Endothelial cell of umbilical vein (primary cell): ENCODE measurements at regions of chr1 and their contacts with region 1.

Region 1: DNA sequence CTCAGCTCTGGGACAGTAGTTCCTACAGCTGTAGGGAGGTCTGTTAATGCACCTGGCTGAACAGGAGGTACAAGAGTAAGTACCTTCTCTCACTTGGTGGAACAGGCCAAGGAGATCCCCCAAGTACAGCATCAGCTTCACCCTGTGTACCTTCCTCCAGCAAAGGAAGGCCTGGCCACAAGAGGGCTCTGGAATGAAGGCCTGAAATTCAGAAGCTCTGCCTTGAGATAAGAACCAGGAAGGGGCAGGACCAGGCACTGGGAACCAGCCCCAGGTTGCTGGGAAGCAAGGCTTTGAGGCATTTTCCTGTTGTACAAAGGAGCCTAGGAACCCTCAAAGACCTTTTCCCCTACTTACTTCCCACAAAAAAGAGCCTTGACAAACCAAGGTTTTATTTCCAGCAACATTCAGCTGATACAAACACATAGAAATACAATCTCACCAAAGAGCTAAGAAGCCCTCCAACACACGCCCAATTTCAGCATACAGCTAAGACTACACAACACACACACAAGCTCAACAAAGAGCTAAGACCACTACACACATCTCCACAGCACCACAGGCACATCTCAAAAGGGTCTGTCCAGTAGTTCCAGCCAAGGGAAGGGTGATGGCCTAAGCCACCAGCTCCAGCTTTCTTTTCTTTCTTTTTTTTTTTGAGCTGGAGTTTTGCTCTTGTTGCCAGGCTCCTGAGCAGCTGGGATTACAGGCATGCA is 23.5 kb downstream of the F11R start:
- DNase-seq: peak; percentile 90
- H3K4me3 ChIP-seq: no peak overlapping the region
- H3K27ac ChIP-seq: peak overlapping the region; percentile 62
- H3K4me1 ChIP-seq: peaks cover 24% of the 10 kb centered on the region
- H3K27me3 ChIP-seq: no peaks in the 10 kb centered on the region
- CTCF ChIP-seq: peak; percentile 77 to 86
- POLR2A ChIP-seq: no peak

Region 2: GRCh38 chr1:160244209-160244608 is 753.3 kb before region 1 on chr1:
- CTCF ChIA-PET with region 1: no interaction called
- POLR2A ChIA-PET with region 1: no interaction called
- dilution Hi-C with region 1: no loop called
- intact Hi-C with region 1: no loop called
- DNase-seq: peak; percentile 28
- H3K4me3 ChIP-seq: no peak overlapping the region
- H3K27ac ChIP-seq: no peak overlapping the region
- H3K4me1 ChIP-seq: peaks cover 5% of the 10 kb centered on the region
- H3K27me3 ChIP-seq: no peaks in the 10 kb centered on the region
- CTCF ChIP-seq: no peak
- POLR2A ChIP-seq: no peak

Region 3: GRCh38 chr1:161013488-161014230 is 16.2 kb after region 1 on chr1:
- CTCF ChIA-PET with region 1: interaction called, 100 read pairs
- POLR2A ChIA-PET with region 1: interaction called, 10 read pairs
- dilution Hi-C with region 1: no loop called
- intact Hi-C with region 1: loop called (anchors 1 kb)
- DNase-seq: peak; percentile 99
- H3K4me3 ChIP-seq: peak overlapping the region in 2 of 3 experiments; percentile 1 to 21
- H3K27ac ChIP-seq: peak overlapping the region; percentile 99
- H3K4me1 ChIP-seq: peaks cover 37% of the 10 kb centered on the region
- H3K27me3 ChIP-seq: no peaks in the 10 kb centered on the region
- CTCF ChIP-seq: no peak
- POLR2A ChIP-seq: peak; percentile 70

Region 4: DNA sequence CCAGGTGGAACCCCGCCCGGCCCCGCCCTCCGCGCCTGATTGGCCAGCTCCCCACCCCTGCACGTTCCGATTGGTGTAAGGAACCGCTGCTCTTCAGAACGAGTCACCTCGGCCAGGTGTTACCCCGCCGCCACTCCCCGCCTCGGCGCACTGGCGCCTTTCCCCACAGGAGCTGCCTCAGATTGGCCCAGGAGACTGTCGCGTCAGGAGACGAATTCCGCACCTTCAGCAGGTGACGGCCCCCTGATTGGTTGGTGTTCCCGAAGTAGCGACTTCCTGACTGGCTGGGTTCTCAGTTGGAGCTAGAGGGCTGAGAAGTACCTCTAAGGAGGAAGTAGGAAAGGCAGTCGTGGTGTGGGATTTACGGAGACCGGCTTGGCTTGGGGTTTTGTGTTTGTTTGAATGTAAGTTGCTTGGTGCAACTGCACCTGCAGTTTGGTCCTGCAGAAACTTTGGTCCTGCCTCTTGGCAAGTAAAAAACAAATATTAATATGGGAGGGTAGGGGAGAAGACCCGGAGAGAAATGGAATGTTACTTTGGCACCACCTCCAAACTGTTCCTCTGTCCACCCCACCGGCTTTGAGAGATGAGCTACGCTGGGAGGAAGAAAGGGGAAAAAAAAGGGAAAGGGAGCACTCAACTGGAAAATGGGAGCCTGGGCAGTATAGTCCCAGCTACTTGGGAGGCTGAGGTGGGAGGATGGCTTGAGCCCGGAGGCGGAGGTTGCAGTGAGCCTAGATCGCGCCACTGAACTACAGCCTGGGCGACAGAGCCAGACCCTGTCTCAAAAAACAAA is 23.9 kb after region 1 on chr1:
- CTCF ChIA-PET with region 1: interaction called, 100 read pairs
- POLR2A ChIA-PET with region 1: interaction called, 19 read pairs
- dilution Hi-C with region 1: no loop called
- intact Hi-C with region 1: loop called (anchors 2 kb)
- DNase-seq: peak; percentile 84
- H3K4me3 ChIP-seq: peak overlapping the region; percentile 70 to 87 (median 77)
- H3K27ac ChIP-seq: no peak overlapping the region
- H3K4me1 ChIP-seq: peaks cover 39% of the 10 kb centered on the region
- H3K27me3 ChIP-seq: no peaks in the 10 kb centered on the region
- CTCF ChIP-seq: no peak
- POLR2A ChIP-seq: no peak

Region 5: GRCh38 chr1:161045750-161046571 is 48.5 kb after region 1 on chr1 and contains the start of gene USF1:
- CTCF ChIA-PET with region 1: interaction called, 181 read pairs
- POLR2A ChIA-PET with region 1: interaction called, 8 read pairs
- dilution Hi-C with region 1: no loop called
- intact Hi-C with region 1: loop called (anchors 1 kb)
- DNase-seq: peak; percentile 98
- H3K4me3 ChIP-seq: peak within 1 kb of the TSS; percentile 66 to 82 (median 66)
- H3K27ac ChIP-seq: peak within 1 kb of the TSS; percentile 94
- H3K4me1 ChIP-seq: peaks cover 10% of the 10 kb centered on the region
- H3K27me3 ChIP-seq: no peaks in the 10 kb centered on the region
- CTCF ChIP-seq: no peak
- POLR2A ChIP-seq: peak; percentile 76
- total RNA-seq, gene USF1: 56.7 and 57.9 TPM in 2 replicates

Region 6: DNA sequence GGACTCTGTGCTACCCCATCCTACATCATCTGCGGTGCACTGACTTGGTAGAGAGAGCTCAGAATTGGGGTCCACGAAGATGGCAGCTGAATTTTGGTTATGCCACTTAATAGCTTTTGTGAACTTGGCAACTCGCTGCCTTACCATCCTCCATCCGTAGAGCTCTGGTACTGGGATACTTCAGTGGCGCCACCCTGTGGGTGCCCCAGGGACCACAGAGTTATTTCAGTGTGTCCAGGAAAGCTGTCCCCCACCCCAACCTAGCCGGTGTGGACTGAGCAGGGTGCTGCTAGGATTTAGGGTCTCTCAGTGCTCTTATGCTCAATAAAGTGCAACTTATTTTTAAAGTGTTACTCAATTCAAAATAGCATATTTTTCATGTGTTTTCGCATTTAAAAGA is 57.3 kb after region 1 on chr1:
- CTCF ChIA-PET with region 1: interaction called, 11 read pairs
- POLR2A ChIA-PET with region 1: no interaction called
- dilution Hi-C with region 1: no loop called
- intact Hi-C with region 1: no loop called
- DNase-seq: no peak
- H3K4me3 ChIP-seq: no peak overlapping the region
- H3K27ac ChIP-seq: no peak overlapping the region
- H3K4me1 ChIP-seq: no peaks in the 10 kb centered on the region
- H3K27me3 ChIP-seq: no peaks in the 10 kb centered on the region
- CTCF ChIP-seq: no peak
- POLR2A ChIP-seq: no peak

Region 7: GRCh38 chr1:161132410-161133219 is 135.1 kb after region 1 on chr1 and contains the start of gene DEDD:
- CTCF ChIA-PET with region 1: interaction called, 51 read pairs
- POLR2A ChIA-PET with region 1: interaction called, 8 read pairs
- dilution Hi-C with region 1: no loop called
- intact Hi-C with region 1: no loop called
- DNase-seq: peak; percentile 97
- H3K4me3 ChIP-seq: peak within 1 kb of the TSS; percentile 90 to 100 (median 94)
- H3K27ac ChIP-seq: peak within 1 kb of the TSS; percentile 85
- H3K4me1 ChIP-seq: peaks cover 26% of the 10 kb centered on the region
- H3K27me3 ChIP-seq: no peaks in the 10 kb centered on the region
- CTCF ChIP-seq: peak; percentile 1 to 4
- POLR2A ChIP-seq: no peak
- total RNA-seq, gene DEDD: 50.2 and 54.9 TPM in 2 replicates

Region 8: GRCh38 chr1:161139765-161140164 is 142.3 kb after region 1 on chr1:
- CTCF ChIA-PET with region 1: interaction called, 51 read pairs
- POLR2A ChIA-PET with region 1: no interaction called
- dilution Hi-C with region 1: no loop called
- intact Hi-C with region 1: loop called (anchors 1 kb)
- DNase-seq: peak; percentile 75
- H3K4me3 ChIP-seq: no peak overlapping the region
- H3K27ac ChIP-seq: no peak overlapping the region
- H3K4me1 ChIP-seq: no peaks in the 10 kb centered on the region
- H3K27me3 ChIP-seq: no peaks in the 10 kb centered on the region
- CTCF ChIP-seq: peak; percentile 18 to 47
- POLR2A ChIP-seq: no peak

Region 9: DNA sequence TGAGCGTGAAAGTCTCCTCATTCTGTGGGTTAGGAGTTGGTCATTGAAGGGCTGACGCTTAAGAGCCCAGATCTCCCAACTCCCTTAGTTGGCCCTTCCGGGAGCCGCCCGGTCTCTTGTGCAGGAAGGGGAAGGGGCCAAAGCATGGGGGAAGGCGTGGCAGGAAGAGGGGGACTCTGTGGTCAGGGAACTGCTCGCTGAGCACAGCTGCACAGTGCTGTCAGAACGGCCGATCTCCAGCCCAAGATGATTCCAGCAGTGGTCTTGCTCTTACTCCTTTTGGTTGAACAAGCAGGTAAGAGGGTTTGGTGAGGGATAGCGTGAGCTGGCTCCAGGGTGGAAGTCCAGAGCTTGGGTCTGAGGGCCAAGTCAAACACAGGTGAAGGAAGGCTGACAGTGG is 217.6 kb after region 1 on chr1 and contains the start of gene FCER1G:
- CTCF ChIA-PET with region 1: no interaction called
- POLR2A ChIA-PET with region 1: no interaction called
- dilution Hi-C with region 1: no loop called
- intact Hi-C with region 1: no loop called
- DNase-seq: no peak
- H3K4me3 ChIP-seq: no peak within 1 kb of the TSS
- H3K27ac ChIP-seq: no peak within 1 kb of the TSS
- H3K4me1 ChIP-seq: peaks cover 11% of the 10 kb centered on the region
- H3K27me3 ChIP-seq: no peaks in the 10 kb centered on the region
- CTCF ChIP-seq: no peak
- POLR2A ChIP-seq: no peak
- total RNA-seq, gene FCER1G: 1.6 and 2.2 TPM in 2 replicates